ENCODE measurements at regions of chr4 and their contacts with region 1.

Region 1: GRCh38 chr4:162645381-162645780 is 481.6 kb upstream of the FSTL5 start:
- DNase-seq: no peak
- ATAC-seq: no peak
- H3K4me3 ChIP-seq: no peak overlapping the region
- H3K27ac ChIP-seq: no peak overlapping the region
- H3K4me1 ChIP-seq: no peaks in the 10 kb centered on the region
- H3K27me3 ChIP-seq: no peaks in the 10 kb centered on the region
- CTCF ChIP-seq: peak; percentile 40; the same call in 1 of the 2 replicates

Region 2: DNA sequence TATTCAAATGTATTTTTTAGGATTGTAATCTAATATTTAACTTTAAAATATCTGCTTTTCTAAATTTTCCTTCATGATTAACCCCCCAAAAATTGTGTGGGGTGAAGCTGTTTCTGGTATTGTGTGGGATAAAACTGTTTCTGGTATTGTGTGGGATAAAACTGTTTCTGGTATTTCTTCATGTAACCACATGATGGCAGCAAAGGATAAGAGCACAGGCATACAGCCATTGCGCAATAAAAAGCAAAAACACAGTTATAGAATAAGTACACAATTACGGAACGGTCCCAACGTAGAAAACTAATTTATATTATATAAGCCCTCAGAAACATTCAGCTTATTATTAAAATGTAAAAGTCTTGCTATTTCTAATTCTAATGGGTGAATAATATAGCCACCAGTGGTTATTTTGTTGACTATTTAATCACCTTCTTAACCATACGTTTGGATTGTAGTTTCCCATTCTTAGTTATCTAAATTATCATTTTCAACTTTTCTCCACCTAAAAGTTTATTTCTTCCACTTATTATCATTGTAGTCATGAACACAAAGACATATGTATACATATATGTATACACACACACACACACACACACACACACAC is 147.7 kb before region 1 on chr4:
- CTCF ChIA-PET with region 1: no interaction called
- POLR2A ChIA-PET with region 1: no interaction called
- intact Hi-C with region 1: loop called (anchors 1 kb)
- DNase-seq: peak; percentile 42
- ATAC-seq: peak; percentile 38
- H3K4me3 ChIP-seq: no peak overlapping the region
- H3K27ac ChIP-seq: no peak overlapping the region
- H3K4me1 ChIP-seq: no peaks in the 10 kb centered on the region
- H3K27me3 ChIP-seq: no peaks in the 10 kb centered on the region
- CTCF ChIP-seq: peak; percentile 72

Region 3: GRCh38 chr4:162959046-162959445 is 313.7 kb after region 1 on chr4:
- CTCF ChIA-PET with region 1: interaction called, 9 read pairs
- POLR2A ChIA-PET with region 1: no interaction called
- intact Hi-C with region 1: loop called (anchors 2 kb)
- DNase-seq: peak; percentile 4
- ATAC-seq: peak; percentile 59
- H3K4me3 ChIP-seq: no peak overlapping the region
- H3K27ac ChIP-seq: no peak overlapping the region
- H3K4me1 ChIP-seq: no peaks in the 10 kb centered on the region
- H3K27me3 ChIP-seq: no peaks in the 10 kb centered on the region
- CTCF ChIP-seq: no peak

Region 4: GRCh38 chr4:163042306-163042705 is 396.9 kb after region 1 on chr4:
- CTCF ChIA-PET with region 1: no interaction called
- POLR2A ChIA-PET with region 1: no interaction called
- intact Hi-C with region 1: loop called (anchors 1 kb)
- DNase-seq: no peak
- ATAC-seq: no peak
- H3K4me3 ChIP-seq: no peak overlapping the region
- H3K27ac ChIP-seq: no peak overlapping the region
- H3K4me1 ChIP-seq: no peaks in the 10 kb centered on the region
- H3K27me3 ChIP-seq: no peaks in the 10 kb centered on the region
- CTCF ChIP-seq: no peak

Measured in PC-3 (cell line).